ENCODE measurements at regions of chr21 and their contacts with region 1.

Region 1: DNA sequence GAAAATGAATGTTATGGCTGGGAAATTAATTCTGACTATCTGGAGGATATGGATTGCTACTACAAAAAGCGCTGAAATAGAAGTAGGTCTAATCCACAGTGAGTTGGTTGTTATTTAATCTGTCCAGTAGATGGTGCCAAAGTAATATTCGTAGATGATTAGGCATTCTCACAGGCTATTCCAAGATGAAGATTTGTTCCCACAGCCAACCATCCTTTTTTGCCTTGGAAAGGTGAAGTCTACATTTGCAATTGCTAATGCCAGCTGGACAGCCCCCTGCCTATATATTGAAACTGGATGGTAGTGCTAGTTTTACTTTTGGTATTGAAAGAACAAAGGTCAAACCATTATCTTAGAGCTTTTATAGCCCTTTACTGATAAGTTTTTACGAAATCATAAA is 43.8 kb downstream of the RBM11 start:
- DNase-seq: no peak
- ATAC-seq: peak; percentile 76
- H3K4me3 ChIP-seq: no peak overlapping the region
- H3K27ac ChIP-seq: no peak overlapping the region
- H3K4me1 ChIP-seq: no peaks in the 10 kb centered on the region
- H3K27me3 ChIP-seq: no peaks in the 10 kb centered on the region

Region 2: DNA sequence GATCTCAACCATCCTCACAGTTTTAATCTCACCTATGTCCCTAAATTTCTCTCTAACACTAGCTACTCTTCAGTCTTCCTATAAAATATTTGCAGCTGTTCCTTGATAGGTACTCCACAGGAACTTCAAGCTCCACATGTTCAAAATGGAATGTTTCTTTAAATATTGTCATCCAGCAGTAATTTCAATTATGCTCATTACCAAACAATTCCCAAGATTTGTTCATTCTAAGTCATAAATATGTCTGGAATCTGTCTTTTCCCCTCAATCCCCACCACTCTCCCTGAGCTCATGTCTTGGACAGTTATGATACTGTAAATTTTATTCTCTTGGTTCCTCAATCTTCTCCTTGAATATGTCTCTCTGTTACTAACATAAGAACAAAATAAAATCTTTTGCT is 590.6 kb after region 1 on chr21:
- intact Hi-C with region 1: loop called in 1 of 2 experiments (anchors 10 kb)
- DNase-seq: no peak
- ATAC-seq: no peak
- H3K4me3 ChIP-seq: no peak overlapping the region
- H3K27ac ChIP-seq: no peak overlapping the region
- H3K4me1 ChIP-seq: no peaks in the 10 kb centered on the region
- H3K27me3 ChIP-seq: no peaks in the 10 kb centered on the region

Region 3: GRCh38 chr21:15592271-15592860 is 1332.6 kb after region 1 on chr21:
- intact Hi-C with region 1: loop called in 1 of 2 experiments (anchors 10 kb)
- DNase-seq: no peak
- ATAC-seq: no peak
- H3K4me3 ChIP-seq: no peak overlapping the region
- H3K27ac ChIP-seq: no peak overlapping the region
- H3K4me1 ChIP-seq: no peaks in the 10 kb centered on the region
- H3K27me3 ChIP-seq: no peaks in the 10 kb centered on the region

Measured in aorta (tissue), 5 donors.